ENCODE measurements at regions of chr16 and their contacts with region 1.

Region 1: DNA sequence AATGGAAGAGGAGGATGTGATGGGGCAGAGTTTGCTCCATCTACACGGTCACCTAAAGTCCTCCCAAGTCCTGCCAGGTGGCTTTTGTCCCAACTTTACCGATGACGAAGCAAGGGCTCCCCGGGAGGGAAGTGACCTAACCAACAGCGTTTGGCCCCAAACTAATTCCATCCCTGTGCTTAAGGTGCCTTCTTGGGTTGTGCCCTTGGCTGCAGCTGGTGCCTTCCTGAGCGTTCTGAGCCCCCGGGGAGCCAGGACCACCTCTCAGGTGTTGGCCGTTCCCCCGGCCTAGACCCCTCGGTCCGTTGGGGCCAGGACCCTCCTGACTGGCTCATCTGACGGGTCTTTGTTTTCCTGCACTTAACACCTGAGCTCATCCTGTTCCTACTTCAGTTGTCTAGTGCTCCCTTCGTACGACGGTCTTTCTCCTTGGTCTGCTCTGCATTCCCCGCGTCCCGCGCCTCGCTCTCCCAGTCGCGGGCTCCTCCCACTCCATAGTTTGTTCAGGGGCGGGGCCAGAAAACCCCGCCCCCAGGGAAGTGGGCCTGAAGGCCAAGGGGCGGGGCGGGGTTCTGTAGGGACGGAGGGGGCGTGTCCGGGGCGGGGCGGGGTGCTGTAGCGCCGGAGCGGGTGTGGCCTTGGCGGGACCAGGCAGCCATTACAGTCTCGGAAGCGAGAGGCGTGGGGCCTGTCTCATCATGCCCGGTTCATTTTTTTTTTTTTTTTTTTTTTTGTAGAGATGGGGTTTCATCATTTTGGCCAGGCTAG is 822 bp upstream of the ZSCAN10 start:
- DNase-seq: peak; percentile 65 to 94 (median 88)
- ATAC-seq: peak; percentile 89
- H3K4me3 ChIP-seq: peak overlapping the region; percentile 9 to 38
- H3K4me3 Mint-ChIP-seq: peak overlapping the region; percentile 75
- H3K27ac ChIP-seq: peak overlapping the region in 1 of 2 experiments; percentile 70
- H3K27ac Mint-ChIP-seq: peak overlapping the region; percentile 82
- H3K4me1 ChIP-seq: peaks cover 38% of the 10 kb centered on the region
- H3K4me1 Mint-ChIP-seq: peaks cover 46% of the 10 kb centered on the region
- H3K27me3 ChIP-seq: no peaks in the 10 kb centered on the region
- H3K27me3 Mint-ChIP-seq: no peaks in the 10 kb centered on the region
- CTCF ChIP-seq: no peak

Region 2: GRCh38 chr16:3065069-3065741 is 34.7 kb before region 1 on chr16 and contains the start of gene IL32:
- CTCF ChIA-PET with region 1: interaction called, 77 read pairs
- POLR2A ChIA-PET with region 1: interaction called, 8 read pairs
- intact Hi-C with region 1: no loop called
- DNase-seq: peak in 8 of 9 experiments; percentile 57 to 92 (median 72)
- ATAC-seq: peak; percentile 43
- H3K4me3 ChIP-seq: peak within 1 kb of the TSS; percentile 97 to 100
- H3K4me3 Mint-ChIP-seq: peak within 1 kb of the TSS; percentile 97
- H3K27ac ChIP-seq: peak within 1 kb of the TSS; percentile 82 to 100
- H3K27ac Mint-ChIP-seq: peak within 1 kb of the TSS; percentile 97
- H3K4me1 ChIP-seq: peaks cover 48% of the 10 kb centered on the region
- H3K4me1 Mint-ChIP-seq: peaks cover 58% of the 10 kb centered on the region
- H3K27me3 ChIP-seq: no peaks in the 10 kb centered on the region
- H3K27me3 Mint-ChIP-seq: no peaks in the 10 kb centered on the region
- CTCF ChIP-seq: no peak
- total RNA-seq, gene IL32: 123 to 127 TPM

Region 3: DNA sequence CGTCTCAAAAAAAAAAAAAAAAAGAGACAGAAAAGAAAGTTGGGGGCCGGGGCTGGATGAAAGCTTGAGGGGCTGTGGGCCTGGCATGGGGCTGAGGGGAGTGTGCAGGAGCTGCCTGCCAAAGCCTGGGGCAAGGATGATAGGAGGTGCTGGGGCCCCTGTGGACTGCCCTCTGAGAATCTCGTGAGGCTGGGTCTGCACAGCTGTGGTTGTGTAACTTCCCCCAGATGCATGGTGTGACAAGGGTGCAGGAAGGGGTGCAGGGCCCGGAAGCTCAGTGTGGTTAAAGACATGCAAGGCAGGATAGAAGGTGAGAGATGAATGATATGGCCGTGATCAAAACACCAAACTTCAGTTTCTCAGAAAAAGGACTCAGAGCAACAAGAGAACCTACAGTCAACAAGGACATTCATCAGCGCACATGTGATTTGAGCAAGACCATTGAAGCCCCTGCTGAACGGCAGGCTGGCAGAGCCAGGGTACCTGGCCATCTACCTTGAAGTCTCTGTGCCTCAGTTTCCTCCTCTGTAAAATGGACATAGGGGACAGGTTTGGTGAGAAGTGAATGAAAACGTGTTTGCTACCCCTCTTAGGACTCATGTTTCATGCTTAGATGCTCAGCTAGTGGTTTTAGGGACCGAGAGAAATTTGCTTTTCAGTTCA is 24.9 kb before region 1 on chr16:
- CTCF ChIA-PET with region 1: interaction called, 55 read pairs
- POLR2A ChIA-PET with region 1: interaction called, 26 read pairs
- intact Hi-C with region 1: loop called (anchors 2 kb)
- DNase-seq: peak; percentile 52 to 95 (median 86)
- ATAC-seq: peak; percentile 88
- H3K4me3 ChIP-seq: peak overlapping the region; percentile 3 to 19
- H3K4me3 Mint-ChIP-seq: peak overlapping the region; percentile 72
- H3K27ac ChIP-seq: peak overlapping the region; percentile 49 to 81
- H3K27ac Mint-ChIP-seq: peak overlapping the region; percentile 95
- H3K4me1 ChIP-seq: peaks cover 87% of the 10 kb centered on the region
- H3K4me1 Mint-ChIP-seq: peaks cover 89% of the 10 kb centered on the region
- H3K27me3 ChIP-seq: no peaks in the 10 kb centered on the region
- H3K27me3 Mint-ChIP-seq: no peaks in the 10 kb centered on the region
- CTCF ChIP-seq: no peak

Region 4: GRCh38 chr16:3123986-3124886 is 24.3 kb after region 1 on chr16:
- CTCF ChIA-PET with region 1: interaction called, 256 read pairs
- POLR2A ChIA-PET with region 1: interaction called, 13 read pairs
- intact Hi-C with region 1: loop called (anchors 1 kb)
- DNase-seq: peak; percentile 88 to 98 (median 97)
- ATAC-seq: peak; percentile 90
- H3K4me3 ChIP-seq: peak overlapping the region; percentile 72 to 89
- H3K4me3 Mint-ChIP-seq: peak overlapping the region; percentile 98
- H3K27ac ChIP-seq: peak overlapping the region; percentile 44 to 72
- H3K27ac Mint-ChIP-seq: peak overlapping the region; percentile 95
- H3K4me1 ChIP-seq: peaks cover 30% of the 10 kb centered on the region
- H3K4me1 Mint-ChIP-seq: peaks cover 45% of the 10 kb centered on the region
- H3K27me3 ChIP-seq: no peaks in the 10 kb centered on the region
- H3K27me3 Mint-ChIP-seq: no peaks in the 10 kb centered on the region
- CTCF ChIP-seq: no peak

Region 5: GRCh38 chr16:3158471-3159314 is 58.8 kb after region 1 on chr16:
- CTCF ChIA-PET with region 1: interaction called, 4 read pairs
- POLR2A ChIA-PET with region 1: no interaction called
- intact Hi-C with region 1: loop called in 1 of 2 experiments (anchors 2 kb)
- DNase-seq: peak; percentile 91 to 98 (median 95)
- ATAC-seq: peak; percentile 91
- H3K4me3 ChIP-seq: peak overlapping the region; percentile 80 to 97
- H3K4me3 Mint-ChIP-seq: peak overlapping the region; percentile 90
- H3K27ac ChIP-seq: peak overlapping the region; percentile 70 to 78
- H3K27ac Mint-ChIP-seq: peak overlapping the region; percentile 94
- H3K4me1 ChIP-seq: peaks cover 23% of the 10 kb centered on the region
- H3K4me1 Mint-ChIP-seq: peaks cover 15% of the 10 kb centered on the region
- H3K27me3 ChIP-seq: no peaks in the 10 kb centered on the region
- H3K27me3 Mint-ChIP-seq: no peaks in the 10 kb centered on the region
- CTCF ChIP-seq: no peak

Region 6: DNA sequence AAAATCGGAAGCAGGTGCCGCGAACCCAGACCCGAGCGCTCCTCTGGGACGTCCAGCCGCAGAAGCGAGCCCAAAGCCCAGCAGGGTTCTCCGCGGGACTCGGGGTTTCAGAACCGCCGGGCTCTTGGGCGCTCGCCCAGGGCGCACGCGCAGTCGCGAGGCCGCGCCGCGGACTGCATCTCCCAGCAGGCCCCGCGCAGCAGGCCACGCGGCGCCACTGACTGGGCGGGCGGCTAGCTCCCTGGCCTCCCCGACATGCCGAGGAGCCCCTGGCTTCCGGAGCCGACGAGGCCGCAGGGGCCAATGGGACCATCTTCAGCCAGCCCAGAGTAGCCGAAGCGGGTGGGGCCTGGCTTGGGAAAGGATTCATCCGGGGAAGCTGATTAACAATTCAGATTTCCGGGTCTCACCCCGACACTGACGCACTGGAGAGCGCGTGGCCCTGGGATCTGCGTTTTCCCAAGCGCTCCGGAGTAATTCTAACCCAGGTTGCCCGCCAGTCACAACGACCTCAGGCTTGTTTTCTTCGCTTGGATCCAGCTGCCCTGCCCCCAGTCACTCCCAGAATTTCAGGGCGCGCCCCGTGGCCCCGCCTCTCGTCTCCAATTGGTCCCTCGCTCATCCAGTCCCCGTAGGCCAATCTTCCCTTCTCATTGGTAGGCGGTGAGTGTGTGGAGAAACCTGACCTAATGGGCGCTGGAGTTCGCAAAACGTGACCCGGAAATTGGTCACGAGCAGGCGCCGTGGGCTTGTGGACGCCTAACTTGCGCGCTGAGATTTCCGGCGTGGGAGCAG is 183.0 kb after region 1 on chr16 and contains the start of gene ZNF263:
- CTCF ChIA-PET with region 1: no interaction called
- POLR2A ChIA-PET with region 1: no interaction called
- intact Hi-C with region 1: no loop called
- DNase-seq: peak; percentile 82 to 98 (median 92)
- ATAC-seq: peak; percentile 88
- H3K4me3 ChIP-seq: peak within 1 kb of the TSS; percentile 84 to 92
- H3K4me3 Mint-ChIP-seq: peak within 1 kb of the TSS; percentile 89
- H3K27ac ChIP-seq: peak within 1 kb of the TSS; percentile 96 to 100
- H3K27ac Mint-ChIP-seq: peak within 1 kb of the TSS; percentile 96
- H3K4me1 ChIP-seq: peaks cover 28% of the 10 kb centered on the region
- H3K4me1 Mint-ChIP-seq: peaks cover 56% of the 10 kb centered on the region
- H3K27me3 ChIP-seq: no peaks in the 10 kb centered on the region
- H3K27me3 Mint-ChIP-seq: no peaks in the 10 kb centered on the region
- CTCF ChIP-seq: no peak
- total RNA-seq, gene ZNF263: 44.2 to 49.0 TPM